ENCODE measurements at regions of chr1 and their contacts with region 1.

Region 1: DNA sequence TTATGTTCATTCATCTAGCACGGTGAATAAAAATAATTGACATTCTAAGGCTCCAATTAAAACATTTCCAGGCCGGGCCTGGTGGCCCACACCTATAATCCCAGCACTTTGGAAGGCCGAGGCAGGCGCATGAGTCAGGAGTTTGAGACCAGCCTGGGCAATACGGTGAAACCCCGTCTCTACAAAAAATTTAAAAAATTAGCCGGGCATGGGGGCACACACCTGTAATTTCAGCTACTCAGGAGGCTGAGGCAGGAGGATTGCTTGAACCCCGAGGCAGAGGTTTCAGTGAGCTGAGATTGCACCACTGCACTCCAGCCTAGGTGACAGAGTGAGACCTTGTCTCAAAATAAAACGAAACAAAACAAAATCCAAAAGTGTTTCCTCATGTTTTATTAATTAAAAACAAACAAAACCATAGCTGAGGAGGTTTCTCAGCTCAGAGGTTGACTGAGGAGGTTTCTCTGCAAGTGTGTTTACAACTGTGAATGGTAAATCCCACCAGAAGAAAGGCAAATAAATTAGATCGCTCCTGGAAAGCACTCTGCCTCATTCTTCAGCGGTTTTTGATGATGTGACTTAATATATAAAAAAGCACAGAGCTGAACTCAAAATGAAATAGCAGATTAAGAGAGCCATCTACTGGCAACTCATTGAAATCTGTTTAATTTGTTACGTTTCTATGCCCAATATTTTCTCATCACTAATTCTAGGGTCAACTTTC is 37.7 kb upstream of the ATG4C start:
- DNase-seq: no peak
- H3K4me3 Mint-ChIP-seq: no peak overlapping the region
- H3K27ac Mint-ChIP-seq: no peak overlapping the region
- H3K4me1 Mint-ChIP-seq: no peaks in the 10 kb centered on the region
- H3K27me3 Mint-ChIP-seq: peaks cover 21% of the 10 kb centered on the region

Region 2: GRCh38 chr1:62175568-62176179 is 570.6 kb before region 1 on chr1:
- intact Hi-C with region 1: loop called (anchors 2 kb)
- DNase-seq: peak; percentile 82
- H3K4me3 Mint-ChIP-seq: no peak overlapping the region
- H3K27ac Mint-ChIP-seq: no peak overlapping the region
- H3K4me1 Mint-ChIP-seq: no peaks in the 10 kb centered on the region
- H3K27me3 Mint-ChIP-seq: no peaks in the 10 kb centered on the region

Region 3: DNA sequence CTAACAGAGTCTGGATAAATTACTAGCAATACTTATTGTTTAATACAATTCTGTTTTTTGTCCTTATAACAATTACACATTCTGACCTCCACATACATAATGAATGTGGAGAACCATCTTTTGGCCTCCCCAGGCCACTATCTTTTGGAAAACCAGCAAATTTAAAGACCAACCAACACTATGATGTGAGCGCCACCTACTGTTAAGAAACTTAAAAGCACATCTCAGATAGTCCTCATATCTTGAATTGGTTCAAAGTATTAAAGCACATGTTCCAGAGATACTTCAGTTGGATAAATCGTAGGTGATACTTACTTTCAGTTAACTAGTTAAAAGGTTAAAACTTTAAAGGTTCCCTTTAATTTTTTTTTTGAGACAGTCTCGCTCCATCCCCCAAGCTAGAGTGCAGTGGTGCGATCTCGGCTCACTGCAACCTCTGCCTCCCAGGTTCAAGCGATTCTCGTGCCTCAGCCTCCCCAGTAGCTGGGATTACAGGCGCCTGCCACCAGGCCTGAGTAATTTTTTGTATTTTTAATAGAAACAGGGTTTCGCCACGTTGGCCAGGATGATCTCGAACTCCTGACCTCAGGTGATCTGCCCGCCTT is 338.7 kb before region 1 on chr1:
- intact Hi-C with region 1: loop called (anchors 10 kb)
- DNase-seq: peak; percentile 73
- H3K4me3 Mint-ChIP-seq: no peak overlapping the region
- H3K27ac Mint-ChIP-seq: no peak overlapping the region
- H3K4me1 Mint-ChIP-seq: no peaks in the 10 kb centered on the region
- H3K27me3 Mint-ChIP-seq: peaks cover 7% of the 10 kb centered on the region

Region 4: GRCh38 chr1:62508187-62508758 is 238.0 kb before region 1 on chr1:
- intact Hi-C with region 1: loop called (anchors 1 kb)
- DNase-seq: peak; percentile 63
- H3K4me3 Mint-ChIP-seq: no peak overlapping the region
- H3K27ac Mint-ChIP-seq: no peak overlapping the region
- H3K4me1 Mint-ChIP-seq: no peaks in the 10 kb centered on the region
- H3K27me3 Mint-ChIP-seq: no peaks in the 10 kb centered on the region

Region 5: DNA sequence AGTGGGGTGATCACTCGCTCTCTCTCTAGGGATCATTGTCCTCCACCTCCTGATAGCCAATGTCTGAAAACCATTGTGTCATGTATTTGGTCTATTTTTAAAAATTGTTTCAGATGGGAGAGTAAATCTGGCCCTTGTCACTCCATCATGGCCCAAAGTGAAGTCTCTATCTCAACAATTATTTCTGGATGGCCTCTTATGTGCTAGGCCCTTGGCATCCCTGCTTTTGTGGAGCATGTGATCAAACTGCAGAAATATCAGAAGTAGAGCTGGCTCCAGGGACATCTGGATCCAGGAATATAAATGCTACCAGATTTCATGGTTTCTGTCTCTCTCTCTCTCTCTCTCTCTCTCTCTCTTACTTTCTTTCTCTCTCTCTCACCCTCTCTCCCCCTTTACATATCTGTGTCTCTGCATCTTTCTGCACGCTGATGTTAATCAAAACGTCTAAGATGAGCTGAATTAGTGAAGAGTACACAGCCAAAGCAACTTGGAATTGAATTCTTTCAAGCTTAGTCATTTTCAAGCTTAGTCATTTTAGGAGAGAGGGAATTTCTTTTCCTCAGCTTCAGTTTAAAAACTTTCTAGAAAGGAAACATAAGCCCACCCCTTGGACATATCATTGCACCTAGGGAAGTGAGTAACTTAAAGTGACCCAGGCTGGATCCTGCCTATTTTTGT is 10.6 kb before region 1 on chr1:
- intact Hi-C with region 1: no loop called
- DNase-seq: no peak
- H3K4me3 Mint-ChIP-seq: no peak overlapping the region
- H3K27ac Mint-ChIP-seq: no peak overlapping the region
- H3K4me1 Mint-ChIP-seq: peaks cover under 1% of the 10 kb centered on the region
- H3K27me3 Mint-ChIP-seq: peaks cover 11% of the 10 kb centered on the region